Gastrocnemius medialis (tissue), 4 donors: ENCODE measurements at regions of chr5 and their contacts with region 1.

Region 1: GRCh38 chr5:38441453-38442246 is 114.8 kb downstream of the LIFR start:
- DNase-seq: peak; percentile 78 to 88
- ATAC-seq: peak; percentile 84 to 85
- H3K4me3 ChIP-seq: no peak overlapping the region
- H3K27ac ChIP-seq: peak overlapping the region in 2 of 4 donors; percentile 35 to 39
- H3K4me1 ChIP-seq: peaks cover 6 to 9% of the 10 kb centered on the region in 2 donors
- H3K27me3 ChIP-seq: no peaks in the 10 kb centered on the region
- CTCF ChIP-seq: peak; percentile 95 to 98 (median 96)
- POLR2A ChIP-seq: no peak

Region 2: GRCh38 chr5:37837414-37838032 is 604.1 kb before region 1 on chr5:
- in situ Hi-C with region 1: no loop called
- intact Hi-C with region 1: loop called (anchors 10 kb)
- DNase-seq: peak; percentile 49 to 68
- ATAC-seq: peak; percentile 36 to 57
- H3K4me3 ChIP-seq: peak overlapping the region; percentile 64 to 73 (median 70)
- H3K27ac ChIP-seq: peak overlapping the region; percentile 66 to 95 (median 86)
- H3K4me1 ChIP-seq: peaks cover 22 to 49% of the 10 kb centered on the region in 2 donors
- H3K27me3 ChIP-seq: peaks cover 0 to 70% (median 7%) of the 10 kb centered on the region in 3 donors
- CTCF ChIP-seq: peak; percentile 79 to 92 (median 88)
- POLR2A ChIP-seq: no peak

Region 3: DNA sequence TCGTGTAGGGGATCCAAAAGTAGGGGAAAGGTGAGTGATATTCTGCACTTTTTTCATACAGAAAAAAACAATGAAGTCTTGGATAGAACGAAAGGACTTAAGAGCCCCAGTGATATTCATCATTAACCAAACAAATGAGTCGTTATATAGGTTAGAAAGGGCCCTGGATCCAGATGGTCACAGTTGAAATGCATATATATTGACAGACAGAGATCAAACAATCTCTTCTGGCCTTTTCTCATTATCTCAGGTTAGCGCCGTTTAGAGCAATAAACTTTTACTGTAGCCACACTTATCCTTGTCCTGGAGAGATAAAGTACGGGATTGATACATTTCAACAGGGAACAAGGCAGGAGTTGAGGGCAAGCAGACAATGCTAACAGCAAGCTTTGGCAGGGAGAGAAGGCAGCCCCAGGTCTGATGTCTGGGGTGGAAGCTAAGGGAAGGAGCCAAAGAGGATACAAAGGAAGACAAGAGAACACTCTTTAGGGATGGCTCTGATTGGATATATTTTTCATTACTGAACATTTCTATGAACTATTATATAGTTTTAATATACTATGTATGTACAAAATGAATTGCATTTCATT is 37.8 kb after region 1 on chr5:
- in situ Hi-C with region 1: no loop called
- intact Hi-C with region 1: loop called (anchors 5 kb)
- DNase-seq: no peak
- ATAC-seq: no peak
- H3K4me3 ChIP-seq: no peak overlapping the region
- H3K27ac ChIP-seq: no peak overlapping the region
- H3K4me1 ChIP-seq: no peaks in the 10 kb centered on the region
- H3K27me3 ChIP-seq: no peaks in the 10 kb centered on the region
- CTCF ChIP-seq: no peak
- POLR2A ChIP-seq: no peak

Region 4: DNA sequence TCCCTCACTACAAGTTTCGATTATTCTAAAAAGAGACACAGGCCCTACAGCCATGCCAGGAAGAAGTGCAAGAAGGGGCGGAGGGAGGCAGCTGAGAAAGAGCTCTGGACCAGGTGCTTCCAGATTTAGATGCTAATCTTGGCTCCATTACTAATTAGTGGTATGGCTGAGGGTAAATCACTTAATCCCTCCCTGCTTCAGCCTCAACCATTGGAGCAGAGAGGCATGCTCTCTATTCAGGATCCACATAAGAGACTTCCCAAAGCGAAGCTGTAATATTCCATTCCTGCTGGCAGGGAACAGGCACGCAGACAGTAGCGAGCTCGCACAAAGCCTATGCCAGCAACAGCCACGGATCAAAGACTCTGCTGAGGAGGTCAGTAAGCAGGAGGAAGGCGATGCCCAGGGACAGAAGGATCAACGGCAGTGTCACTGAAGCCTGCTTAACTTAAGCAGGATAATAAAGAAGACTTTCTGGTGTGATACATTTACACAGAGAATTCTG is 90.6 kb after region 1 on chr5:
- in situ Hi-C with region 1: loop called in 1 of 4 experiments (anchors 10 kb)
- intact Hi-C with region 1: loop called (anchors 2 kb)
- DNase-seq: no peak
- ATAC-seq: peak; percentile 28 to 56
- H3K4me3 ChIP-seq: peak overlapping the region in 1 of 4 donors; percentile 18
- H3K27ac ChIP-seq: peak overlapping the region; percentile 78 to 87 (median 85)
- H3K4me1 ChIP-seq: peaks cover 60 to 73% of the 10 kb centered on the region in 2 donors
- H3K27me3 ChIP-seq: no peaks in the 10 kb centered on the region
- CTCF ChIP-seq: no peak
- POLR2A ChIP-seq: no peak

Region 5: GRCh38 chr5:38551030-38552017 is 109.7 kb after region 1 on chr5:
- in situ Hi-C with region 1: loop called in 2 of 4 experiments (anchors 10 kb)
- intact Hi-C with region 1: loop called (anchors 1 kb)
- DNase-seq: no peak
- ATAC-seq: peak in 1 of 2 donors; percentile 50
- H3K4me3 ChIP-seq: peak overlapping the region; percentile 0 to 91 (median 19)
- H3K27ac ChIP-seq: peak overlapping the region; percentile 16 to 99 (median 50)
- H3K4me1 ChIP-seq: peaks cover 57 to 77% of the 10 kb centered on the region in 2 donors
- H3K27me3 ChIP-seq: no peaks in the 10 kb centered on the region
- CTCF ChIP-seq: peak; percentile 56 to 64 (median 62)
- POLR2A ChIP-seq: no peak

Region 6: GRCh38 chr5:38666668-38667498 is 225.2 kb after region 1 on chr5:
- in situ Hi-C with region 1: loop called (anchors 5 to 10 kb)
- intact Hi-C with region 1: loop called (anchors 1 kb)
- DNase-seq: peak; percentile 38 to 61
- ATAC-seq: peak; percentile 92 to 97
- H3K4me3 ChIP-seq: no peak overlapping the region
- H3K27ac ChIP-seq: peak overlapping the region; percentile 44 to 79 (median 70)
- H3K4me1 ChIP-seq: peaks cover 30 to 33% of the 10 kb centered on the region in 2 donors
- H3K27me3 ChIP-seq: no peaks in the 10 kb centered on the region
- CTCF ChIP-seq: peak; percentile 67 to 86 (median 84)
- POLR2A ChIP-seq: no peak